Motor neuron (in vitro differentiated cells): ENCODE measurements at regions of chr1 and their contacts with region 1.

Region 1: GRCh38 chr1:203702130-203702577 is 62.8 kb upstream of the LAX1 start:
- ATAC-seq: peak; percentile 51 to 87 (median 81)
- H3K4me3 ChIP-seq: no peak overlapping the region
- H3K27ac ChIP-seq: no peak overlapping the region
- H3K4me1 ChIP-seq: no peaks in the 10 kb centered on the region

Region 2: GRCh38 chr1:202680586-202681352 is 1021.4 kb before region 1 on chr1:
- in situ Hi-C with region 1: no loop called
- ATAC-seq: no peak
- H3K4me3 ChIP-seq: no peak overlapping the region
- H3K27ac ChIP-seq: no peak overlapping the region
- H3K4me1 ChIP-seq: peaks cover 14 to 27% of the 10 kb centered on the region in 2 donors

Region 3: GRCh38 chr1:203326830-203327683 is 375.1 kb before region 1 on chr1:
- in situ Hi-C with region 1: loop called in 5 of 9 experiments (anchors 10 to 25 kb)
- ATAC-seq: peak; percentile 85 to 93 (median 90)
- H3K4me3 ChIP-seq: peak overlapping the region; percentile 28 to 49 (median 31)
- H3K27ac ChIP-seq: peak overlapping the region; percentile 16 to 31
- H3K4me1 ChIP-seq: peaks cover 31 to 38% of the 10 kb centered on the region in 2 donors

Region 4: DNA sequence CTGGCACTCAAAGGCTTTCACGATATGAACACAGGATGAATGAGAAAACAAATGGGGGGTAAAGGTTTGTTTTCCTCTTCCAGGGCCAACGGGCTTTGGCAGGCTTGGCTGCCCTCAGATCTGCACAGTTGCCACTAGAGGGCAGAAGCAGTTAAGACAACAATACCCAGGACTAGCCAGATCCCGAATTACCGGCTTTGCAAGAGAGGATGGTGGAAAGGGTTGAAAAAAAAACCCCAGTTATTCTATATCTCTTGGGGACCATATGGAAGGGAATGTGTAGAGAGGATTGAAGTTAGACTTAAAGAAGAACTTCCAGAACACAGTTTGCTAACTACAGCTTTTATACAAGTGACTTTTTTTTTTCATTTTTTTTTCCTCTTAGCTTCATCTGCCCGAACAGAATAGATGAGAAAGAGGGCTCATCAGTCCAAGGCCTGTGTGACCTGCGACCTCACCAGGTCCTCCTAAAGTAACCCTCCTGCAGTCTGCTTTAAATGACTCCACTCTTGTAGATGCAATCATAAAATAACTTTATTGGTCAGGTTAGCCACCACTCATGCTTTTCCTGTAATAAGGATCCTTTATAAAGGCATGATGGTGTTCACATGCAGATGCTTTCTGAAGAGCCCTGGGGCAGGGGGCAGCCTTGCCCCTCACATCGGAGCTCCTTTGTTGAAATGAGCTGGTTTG is 361.9 kb before region 1 on chr1:
- in situ Hi-C with region 1: loop called in 5 of 9 experiments (anchors 10 to 25 kb)
- ATAC-seq: peak; percentile 66 to 95 (median 90)
- H3K4me3 ChIP-seq: no peak overlapping the region
- H3K27ac ChIP-seq: no peak overlapping the region
- H3K4me1 ChIP-seq: peaks cover 12 to 13% of the 10 kb centered on the region in 2 donors

Region 5: GRCh38 chr1:203410182-203410933 is 291.8 kb before region 1 on chr1:
- in situ Hi-C with region 1: no loop called
- ATAC-seq: no peak
- H3K4me3 ChIP-seq: no peak overlapping the region
- H3K27ac ChIP-seq: no peak overlapping the region
- H3K4me1 ChIP-seq: peaks cover 0 to 8% of the 10 kb centered on the region in 2 donors

Region 6: GRCh38 chr1:203492082-203492747 is 209.9 kb before region 1 on chr1:
- in situ Hi-C with region 1: loop called in 1 of 9 experiments (anchors 10 kb)
- ATAC-seq: peak in 5 of 8 experiments; percentile 31 to 73 (median 69)
- H3K4me3 ChIP-seq: no peak overlapping the region
- H3K27ac ChIP-seq: peak overlapping the region in 1 of 2 donors; percentile 13
- H3K4me1 ChIP-seq: peaks cover 17 to 23% of the 10 kb centered on the region in 2 donors

Region 7: GRCh38 chr1:203504397-203505250 is 197.5 kb before region 1 on chr1:
- in situ Hi-C with region 1: loop called in 8 of 9 experiments (anchors 10 to 25 kb)
- ATAC-seq: peak; percentile 56 to 93 (median 72)
- H3K4me3 ChIP-seq: no peak overlapping the region
- H3K27ac ChIP-seq: no peak overlapping the region
- H3K4me1 ChIP-seq: peaks cover 32 to 42% of the 10 kb centered on the region in 2 donors

Region 8: DNA sequence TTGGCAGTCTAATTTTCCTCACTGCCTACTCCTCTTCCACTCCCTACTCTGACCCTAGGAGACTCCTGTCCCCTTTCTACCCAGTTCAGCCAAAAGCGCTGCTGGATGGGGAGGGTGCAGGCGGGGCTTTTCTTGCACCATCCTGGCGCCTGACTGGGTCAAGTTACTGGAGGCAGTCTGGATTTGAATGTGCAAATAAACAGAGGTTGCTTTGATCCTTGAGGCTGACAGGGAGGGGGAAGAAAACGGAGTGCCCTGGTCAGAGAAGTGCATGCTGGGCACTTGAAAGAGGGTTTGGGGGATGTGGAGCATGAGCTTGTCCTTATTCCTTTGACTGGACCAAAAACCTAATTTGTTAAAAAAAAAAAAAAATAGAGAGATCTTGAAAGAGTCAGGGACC is 294.0 kb after region 1 on chr1:
- in situ Hi-C with region 1: no loop called
- ATAC-seq: peak; percentile 42 to 97 (median 50)
- H3K4me3 ChIP-seq: no peak overlapping the region
- H3K27ac ChIP-seq: peak overlapping the region; percentile 64 to 79
- H3K4me1 ChIP-seq: peaks cover 13 to 28% of the 10 kb centered on the region in 2 donors

Region 9: GRCh38 chr1:204714861-204715511 is 1012.8 kb after region 1 on chr1:
- in situ Hi-C with region 1: no loop called
- ATAC-seq: peak in 6 of 8 experiments; percentile 53 to 64 (median 59)
- H3K4me3 ChIP-seq: no peak overlapping the region
- H3K27ac ChIP-seq: peak overlapping the region in 1 of 2 donors; percentile 17
- H3K4me1 ChIP-seq: peaks cover 55 to 64% of the 10 kb centered on the region in 2 donors